CD14-positive monocyte (primary cell): ENCODE measurements at regions of chr10 and their contacts with region 1.

Region 1: GRCh38 chr10:96642973-96643372 is 56.2 kb upstream of the TM9SF3 start:
- DNase-seq: peak; percentile 71 to 89 (median 84)
- H3K4me3 ChIP-seq: no peak overlapping the region
- H3K4me3 Mint-ChIP-seq: no peak overlapping the region
- H3K27ac ChIP-seq: peak overlapping the region in 1 of 2 donors; percentile 90
- H3K27ac Mint-ChIP-seq: peak overlapping the region in 3 of 7 donors; percentile 37 to 61 (median 38)
- H3K4me1 ChIP-seq: peaks cover 34 to 41% of the 10 kb centered on the region in 2 donors
- H3K4me1 Mint-ChIP-seq: peaks cover 41% of the 10 kb centered on the region
- H3K27me3 ChIP-seq: no peaks in the 10 kb centered on the region
- H3K27me3 Mint-ChIP-seq: peaks cover 0 to 8% (median 0%) of the 10 kb centered on the region in 3 donors
- CTCF ChIP-seq: peak; percentile 85

Region 2: GRCh38 chr10:96352582-96352981 is 290.4 kb before region 1 on chr10:
- intact Hi-C with region 1: no loop called
- DNase-seq: no peak
- H3K4me3 ChIP-seq: no peak overlapping the region
- H3K4me3 Mint-ChIP-seq: no peak overlapping the region
- H3K27ac ChIP-seq: no peak overlapping the region
- H3K27ac Mint-ChIP-seq: no peak overlapping the region
- H3K4me1 ChIP-seq: no peaks in the 10 kb centered on the region
- H3K4me1 Mint-ChIP-seq: no peaks in the 10 kb centered on the region
- H3K27me3 ChIP-seq: no peaks in the 10 kb centered on the region
- H3K27me3 Mint-ChIP-seq: peaks cover 1 to 7% (median 3%) of the 10 kb centered on the region in 3 donors
- CTCF ChIP-seq: no peak

Region 3: DNA sequence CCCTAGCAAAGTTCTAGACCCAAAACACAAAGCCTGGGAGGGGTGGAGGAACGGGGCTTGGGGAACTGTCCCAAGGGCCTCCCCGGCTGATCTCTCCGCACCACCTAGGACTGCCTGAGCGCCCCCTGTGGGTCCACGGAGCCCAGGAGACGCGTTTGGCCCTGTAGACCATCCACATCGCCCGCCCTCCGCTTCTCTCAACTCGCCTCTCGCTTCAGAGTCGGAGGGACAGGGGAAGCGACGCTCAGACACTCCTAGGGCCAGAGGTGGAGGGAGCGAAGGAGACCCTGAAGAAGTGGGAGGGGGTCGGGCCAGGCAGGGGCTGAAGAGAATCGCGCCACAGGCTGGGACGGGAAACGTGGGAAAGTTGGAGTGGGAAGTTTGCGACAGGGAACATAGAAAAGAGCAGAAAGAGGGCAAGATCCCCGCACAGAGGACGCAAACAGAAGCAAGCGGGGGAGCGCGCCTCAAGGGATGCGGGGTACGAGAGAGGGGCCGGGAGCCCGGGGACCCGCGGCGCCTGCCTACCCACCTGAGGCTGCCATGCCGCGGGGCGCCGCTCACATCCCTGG is 77.0 kb after region 1 on chr10:
- intact Hi-C with region 1: loop called (anchors 5 kb)
- DNase-seq: peak; percentile 74 to 85 (median 81)
- H3K4me3 ChIP-seq: peak overlapping the region; percentile 67 to 99 (median 86)
- H3K4me3 Mint-ChIP-seq: peak overlapping the region; percentile 99 to 100
- H3K27ac ChIP-seq: peak overlapping the region; percentile 90 to 92
- H3K27ac Mint-ChIP-seq: peak overlapping the region; percentile 97 to 100 (median 98)
- H3K4me1 ChIP-seq: peaks cover 54 to 55% of the 10 kb centered on the region in 2 donors
- H3K4me1 Mint-ChIP-seq: peaks cover 49% of the 10 kb centered on the region
- H3K27me3 ChIP-seq: no peaks in the 10 kb centered on the region
- H3K27me3 Mint-ChIP-seq: peaks cover 0 to 3% (median 0%) of the 10 kb centered on the region in 3 donors
- CTCF ChIP-seq: peak; percentile 89

Region 4: DNA sequence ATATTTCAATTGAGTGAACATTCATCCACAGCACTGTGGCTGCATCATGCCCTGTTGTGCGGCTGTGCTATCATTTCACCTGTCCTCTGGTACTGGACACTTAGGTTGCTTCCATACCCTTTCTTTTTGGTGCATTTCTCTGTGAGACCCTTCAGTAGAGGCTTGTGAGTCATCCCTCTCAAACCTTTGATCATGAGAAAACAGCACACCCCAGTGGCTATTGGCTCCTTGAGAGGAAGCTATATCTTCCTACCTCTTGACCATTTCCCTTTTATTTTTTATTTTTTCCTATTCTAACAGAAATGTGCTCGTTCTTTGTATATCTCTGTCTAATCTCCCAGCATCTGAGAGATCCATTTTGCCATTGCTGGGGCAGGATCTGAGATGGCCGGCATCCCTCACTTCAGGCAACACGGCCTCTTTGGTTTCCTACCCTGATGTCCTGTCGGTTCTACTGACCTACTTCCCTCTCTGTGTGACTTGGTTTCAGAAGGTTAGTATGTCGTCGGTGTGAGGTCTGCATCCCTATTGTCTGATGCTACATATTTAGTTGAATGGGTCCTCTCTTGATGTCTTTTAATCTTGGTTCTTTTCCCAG is 101.1 kb after region 1 on chr10:
- intact Hi-C with region 1: loop called in 1 of 2 experiments (anchors 10 kb)
- DNase-seq: peak; percentile 14 to 50 (median 38)
- H3K4me3 ChIP-seq: peak overlapping the region in 1 of 3 experiments; percentile 30
- H3K4me3 Mint-ChIP-seq: peak overlapping the region in 1 of 2 donors; percentile 87
- H3K27ac ChIP-seq: peak overlapping the region in 1 of 2 donors; percentile 43
- H3K27ac Mint-ChIP-seq: peak overlapping the region; percentile 55 to 92 (median 85)
- H3K4me1 ChIP-seq: peaks cover 63 to 64% of the 10 kb centered on the region in 2 donors
- H3K4me1 Mint-ChIP-seq: peaks cover 51% of the 10 kb centered on the region
- H3K27me3 ChIP-seq: no peaks in the 10 kb centered on the region
- H3K27me3 Mint-ChIP-seq: no peaks in the 10 kb centered on the region
- CTCF ChIP-seq: peak; percentile 2

Region 5: DNA sequence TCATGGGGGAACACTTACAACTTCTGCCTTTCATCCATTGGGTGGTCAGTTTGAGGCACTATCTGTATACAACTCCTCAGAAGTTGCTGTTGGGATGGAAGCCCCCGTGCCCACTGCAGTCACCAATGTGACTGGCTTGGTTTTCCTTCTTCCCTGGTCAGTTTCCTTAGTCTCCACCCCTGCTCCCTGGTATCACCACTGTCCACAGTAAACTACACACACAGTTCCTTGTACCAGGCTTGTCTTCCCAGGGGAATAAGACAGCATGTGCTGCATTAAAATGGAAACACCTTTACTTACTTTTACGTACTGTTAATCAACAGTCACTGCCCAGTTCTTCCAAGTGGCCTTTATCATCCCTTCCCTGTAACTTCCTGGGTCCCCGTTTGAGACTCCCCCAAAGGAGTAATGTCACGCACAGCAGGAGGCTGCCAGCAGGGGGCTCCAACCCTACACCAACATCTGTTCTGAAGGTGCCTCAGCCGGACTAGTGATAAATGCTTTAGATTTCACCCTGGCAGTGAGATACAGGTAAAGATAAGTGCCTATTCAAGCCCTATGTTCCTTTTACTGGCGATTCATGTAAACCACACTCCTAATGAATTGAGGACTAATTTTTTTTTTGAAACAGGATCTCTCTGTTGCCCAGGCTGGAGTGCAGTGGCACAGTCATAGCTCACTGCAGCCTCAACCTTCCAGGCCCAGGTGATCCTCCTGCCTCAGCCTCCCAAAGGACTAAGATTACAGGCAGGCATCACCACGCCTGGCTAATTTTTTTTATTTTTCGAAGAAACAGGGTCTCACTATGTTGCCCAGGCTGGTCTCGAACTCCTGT is 122.7 kb after region 1 on chr10:
- intact Hi-C with region 1: loop called in 1 of 2 experiments (anchors 5 kb)
- DNase-seq: peak; percentile 57 to 78 (median 77)
- H3K4me3 ChIP-seq: no peak overlapping the region
- H3K4me3 Mint-ChIP-seq: no peak overlapping the region
- H3K27ac ChIP-seq: no peak overlapping the region
- H3K27ac Mint-ChIP-seq: no peak overlapping the region
- H3K4me1 ChIP-seq: peaks cover 6 to 8% of the 10 kb centered on the region in 2 donors
- H3K4me1 Mint-ChIP-seq: peaks cover 18% of the 10 kb centered on the region
- H3K27me3 ChIP-seq: no peaks in the 10 kb centered on the region
- H3K27me3 Mint-ChIP-seq: peaks cover 0 to 3% (median 2%) of the 10 kb centered on the region in 3 donors
- CTCF ChIP-seq: peak; percentile 92

Region 6: DNA sequence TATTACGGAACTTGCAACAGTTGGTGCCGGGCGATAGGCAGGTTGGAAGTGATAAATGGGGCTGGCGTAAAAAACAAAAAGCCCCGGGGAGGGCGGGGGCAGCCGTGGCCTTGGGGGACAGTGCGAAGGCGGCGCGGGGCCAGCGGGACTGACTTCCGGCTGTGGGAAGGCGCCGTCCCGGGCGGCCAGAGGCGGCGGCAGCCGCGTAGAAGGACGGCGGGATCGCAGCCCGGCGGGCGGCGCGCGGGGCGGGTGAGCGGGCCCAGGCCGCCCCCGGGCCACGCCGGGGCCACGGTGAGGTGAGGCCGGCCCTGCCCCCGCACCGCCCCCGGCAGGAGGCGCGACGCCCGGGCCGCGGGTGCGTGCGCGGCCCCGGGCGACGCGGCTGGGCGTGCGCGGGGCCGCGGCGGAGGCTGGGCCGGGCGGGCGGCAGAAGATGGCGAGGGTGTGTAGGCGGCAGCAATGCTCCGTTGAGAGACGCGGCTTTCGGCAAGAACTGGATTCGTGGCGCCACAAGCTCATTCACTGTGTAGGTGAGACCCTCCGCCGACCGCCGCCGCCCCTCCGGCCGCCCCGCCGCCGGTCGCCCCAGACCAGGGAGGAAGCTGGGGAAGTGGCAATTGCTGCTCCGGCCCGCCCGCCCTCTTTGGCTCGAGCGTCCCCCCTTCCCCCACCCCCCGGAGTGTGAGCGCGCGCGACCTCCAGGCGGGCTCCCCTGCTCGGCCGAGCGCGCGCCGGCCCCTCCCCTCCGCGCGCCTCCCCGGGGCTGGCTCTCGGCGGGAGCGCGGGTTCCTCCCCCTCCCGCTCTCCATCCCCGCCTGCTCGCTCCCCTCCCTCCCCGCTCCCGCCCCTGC is 189.1 kb after region 1 on chr10 and contains the start of gene LCOR:
- intact Hi-C with region 1: loop called (anchors 2 to 5 kb)
- DNase-seq: peak; percentile 82 to 91 (median 86)
- H3K4me3 ChIP-seq: peak within 1 kb of the TSS; percentile 66 to 93 (median 80)
- H3K4me3 Mint-ChIP-seq: peak within 1 kb of the TSS; percentile 87 to 90
- H3K27ac ChIP-seq: peak within 1 kb of the TSS; percentile 70 to 88
- H3K27ac Mint-ChIP-seq: peak within 1 kb of the TSS; percentile 90 to 97 (median 94)
- H3K4me1 ChIP-seq: peaks cover 41 to 55% of the 10 kb centered on the region in 2 donors
- H3K4me1 Mint-ChIP-seq: peaks cover 52% of the 10 kb centered on the region
- H3K27me3 ChIP-seq: no peaks in the 10 kb centered on the region
- H3K27me3 Mint-ChIP-seq: peaks cover 0 to 3% (median 0%) of the 10 kb centered on the region in 3 donors
- CTCF ChIP-seq: no peak
- polyA plus RNA-seq, gene LCOR: 5.7 to 11.8 (median 10.0) TPM